CD4-positive, alpha-beta T cell (primary cell): ENCODE measurements at regions of chr13 and their contacts with region 1.

Region 1: DNA sequence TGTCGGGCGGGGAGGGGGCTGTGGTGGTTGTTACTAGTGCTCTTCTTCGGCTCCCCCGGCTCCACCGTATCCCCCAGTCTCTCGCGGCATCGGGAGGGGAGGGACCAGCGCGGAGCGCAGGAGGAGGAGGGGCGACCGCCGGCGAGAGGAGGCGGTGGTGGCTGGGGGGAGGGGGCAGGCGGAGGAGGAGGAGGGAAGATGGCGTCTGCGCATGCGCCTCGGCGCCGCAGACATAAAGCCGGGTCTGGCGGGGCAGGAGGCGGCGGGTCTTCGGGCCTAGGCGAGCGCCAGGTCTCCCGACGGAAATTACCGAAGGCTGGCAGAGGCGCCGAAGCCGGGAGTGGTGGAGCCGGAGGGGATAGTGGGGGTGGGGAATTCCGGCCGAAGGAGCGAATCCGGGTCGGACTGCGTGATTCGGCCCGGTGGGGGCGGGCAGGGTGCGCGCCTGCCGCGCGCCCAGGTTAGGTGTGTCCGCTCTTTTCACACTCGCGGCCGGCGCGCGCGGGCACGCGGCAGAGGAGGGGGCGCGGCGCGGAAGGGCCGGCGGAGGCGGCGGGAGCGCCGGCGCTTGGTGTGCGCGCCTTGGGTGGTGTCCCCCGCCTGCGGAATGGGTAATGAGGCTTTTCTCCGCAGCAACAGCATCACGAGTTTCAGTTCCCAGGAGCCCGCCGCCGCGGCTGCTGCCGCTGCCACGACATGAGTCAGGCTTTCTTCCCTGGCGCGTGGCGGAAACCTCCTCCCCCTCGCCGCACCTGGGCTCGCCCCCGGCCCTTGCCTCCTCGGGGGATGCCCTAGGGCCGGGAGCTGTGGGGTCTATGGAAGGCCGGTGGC is 1.3 kb upstream of the TSC22D1 start:
- DNase-seq: peak; percentile 93 to 98 (median 96)
- ATAC-seq: peak; percentile 73
- H3K4me3 ChIP-seq: peak overlapping the region; percentile 77
- H3K4me3 Mint-ChIP-seq: peak overlapping the region; percentile 99
- H3K27ac ChIP-seq: peak overlapping the region; percentile 86 to 89
- H3K27ac Mint-ChIP-seq: peak overlapping the region; percentile 96
- H3K4me1 ChIP-seq: peaks cover 37% of the 10 kb centered on the region
- H3K4me1 Mint-ChIP-seq: peaks cover 41% of the 10 kb centered on the region
- H3K27me3 ChIP-seq: no peaks in the 10 kb centered on the region
- H3K27me3 Mint-ChIP-seq: no peaks in the 10 kb centered on the region
- CTCF ChIP-seq: no peak

Region 2: GRCh38 chr13:44141725-44142539 is 435.5 kb before region 1 on chr13:
- CTCF ChIA-PET with region 1: no interaction called
- POLR2A ChIA-PET with region 1: interaction called, 4 read pairs
- intact Hi-C with region 1: loop called in 1 of 2 experiments (anchors 5 kb)
- DNase-seq: peak; percentile 76 to 95 (median 90)
- ATAC-seq: peak; percentile 96
- H3K4me3 ChIP-seq: peak overlapping the region; percentile 84
- H3K4me3 Mint-ChIP-seq: peak overlapping the region; percentile 93
- H3K27ac ChIP-seq: peak overlapping the region; percentile 48 to 76
- H3K27ac Mint-ChIP-seq: peak overlapping the region; percentile 77
- H3K4me1 ChIP-seq: peaks cover 15% of the 10 kb centered on the region
- H3K4me1 Mint-ChIP-seq: peaks cover 16% of the 10 kb centered on the region
- H3K27me3 ChIP-seq: no peaks in the 10 kb centered on the region
- H3K27me3 Mint-ChIP-seq: no peaks in the 10 kb centered on the region
- CTCF ChIP-seq: no peak

Region 3: DNA sequence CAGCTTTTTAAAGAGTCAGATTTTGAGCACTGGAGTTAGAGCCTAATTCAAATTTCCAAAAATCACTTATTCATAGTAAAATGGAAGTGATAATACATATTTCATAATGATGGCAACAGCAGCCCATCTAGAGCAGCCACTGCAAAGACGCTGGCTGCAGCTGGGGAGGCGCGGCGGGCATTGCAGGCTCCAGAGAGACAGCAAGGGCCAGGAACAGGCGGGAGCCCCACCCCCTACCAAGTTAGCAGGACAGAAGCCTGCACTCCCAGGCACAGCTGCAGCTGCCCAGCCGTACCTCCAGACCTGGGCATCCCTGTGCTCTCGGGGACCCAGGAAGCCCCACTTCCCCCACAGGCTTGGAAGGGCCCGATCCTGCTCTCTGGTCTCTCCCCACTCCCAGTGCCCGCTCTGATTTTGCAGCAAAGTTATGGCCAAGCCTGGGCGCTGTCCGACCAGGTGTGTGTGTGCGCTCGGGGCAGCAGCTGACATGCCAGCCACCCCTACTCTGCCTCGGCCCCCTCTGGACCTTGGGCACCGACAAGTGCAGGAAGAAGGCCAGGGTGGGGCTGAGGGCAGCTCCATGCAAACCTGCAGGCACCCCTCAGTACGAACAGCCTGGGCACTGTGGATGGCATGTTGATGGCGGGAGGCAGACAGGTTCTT is 119.0 kb before region 1 on chr13:
- CTCF ChIA-PET with region 1: no interaction called
- POLR2A ChIA-PET with region 1: no interaction called
- intact Hi-C with region 1: no loop called
- DNase-seq: no peak
- ATAC-seq: no peak
- H3K4me3 ChIP-seq: no peak overlapping the region
- H3K4me3 Mint-ChIP-seq: no peak overlapping the region
- H3K27ac ChIP-seq: no peak overlapping the region
- H3K27ac Mint-ChIP-seq: no peak overlapping the region
- H3K4me1 ChIP-seq: peaks cover 7% of the 10 kb centered on the region
- H3K4me1 Mint-ChIP-seq: peaks cover 17% of the 10 kb centered on the region
- H3K27me3 ChIP-seq: no peaks in the 10 kb centered on the region
- H3K27me3 Mint-ChIP-seq: no peaks in the 10 kb centered on the region
- CTCF ChIP-seq: no peak

Region 4: GRCh38 chr13:44484562-44485138 is 92.8 kb before region 1 on chr13:
- CTCF ChIA-PET with region 1: no interaction called
- POLR2A ChIA-PET with region 1: interaction called, 3 read pairs
- intact Hi-C with region 1: loop called in 1 of 2 experiments (anchors 2 kb)
- DNase-seq: peak in 2 of 14 experiments; percentile 6 to 29
- ATAC-seq: no peak
- H3K4me3 ChIP-seq: peak overlapping the region; percentile 1
- H3K4me3 Mint-ChIP-seq: no peak overlapping the region
- H3K27ac ChIP-seq: no peak overlapping the region
- H3K27ac Mint-ChIP-seq: no peak overlapping the region
- H3K4me1 ChIP-seq: no peaks in the 10 kb centered on the region
- H3K4me1 Mint-ChIP-seq: peaks cover 23% of the 10 kb centered on the region
- H3K27me3 ChIP-seq: no peaks in the 10 kb centered on the region
- H3K27me3 Mint-ChIP-seq: no peaks in the 10 kb centered on the region
- CTCF ChIP-seq: no peak

Region 5: GRCh38 chr13:44523146-44524015 is 54.1 kb before region 1 on chr13:
- CTCF ChIA-PET with region 1: no interaction called
- POLR2A ChIA-PET with region 1: no interaction called
- intact Hi-C with region 1: no loop called
- DNase-seq: no peak
- ATAC-seq: no peak
- H3K4me3 ChIP-seq: no peak overlapping the region
- H3K4me3 Mint-ChIP-seq: no peak overlapping the region
- H3K27ac ChIP-seq: no peak overlapping the region
- H3K27ac Mint-ChIP-seq: no peak overlapping the region
- H3K4me1 ChIP-seq: no peaks in the 10 kb centered on the region
- H3K4me1 Mint-ChIP-seq: no peaks in the 10 kb centered on the region
- H3K27me3 ChIP-seq: no peaks in the 10 kb centered on the region
- H3K27me3 Mint-ChIP-seq: no peaks in the 10 kb centered on the region
- CTCF ChIP-seq: no peak

Region 6: GRCh38 chr13:44917589-44918325 is 340.3 kb after region 1 on chr13:
- CTCF ChIA-PET with region 1: no interaction called
- POLR2A ChIA-PET with region 1: interaction called, 17 read pairs
- intact Hi-C with region 1: loop called (anchors 1 to 5 kb)
- DNase-seq: peak; percentile 95 to 99 (median 98)
- ATAC-seq: peak; percentile 77
- H3K4me3 ChIP-seq: peak overlapping the region; percentile 62
- H3K4me3 Mint-ChIP-seq: no peak overlapping the region
- H3K27ac ChIP-seq: peak overlapping the region; percentile 84 to 91
- H3K27ac Mint-ChIP-seq: no peak overlapping the region
- H3K4me1 ChIP-seq: peaks cover 19% of the 10 kb centered on the region
- H3K4me1 Mint-ChIP-seq: peaks cover 5% of the 10 kb centered on the region
- H3K27me3 ChIP-seq: no peaks in the 10 kb centered on the region
- H3K27me3 Mint-ChIP-seq: no peaks in the 10 kb centered on the region
- CTCF ChIP-seq: no peak

Region 7: GRCh38 chr13:45340926-45341750 is 763.7 kb after region 1 on chr13 and contains the start of gene TPT1:
- CTCF ChIA-PET with region 1: no interaction called
- POLR2A ChIA-PET with region 1: no interaction called
- intact Hi-C with region 1: loop called in 1 of 2 experiments (anchors 5 kb)
- DNase-seq: peak; percentile 99 to 100 (median 100)
- ATAC-seq: peak; percentile 84
- H3K4me3 ChIP-seq: peak within 1 kb of the TSS; percentile 98
- H3K4me3 Mint-ChIP-seq: peak within 1 kb of the TSS; percentile 99
- H3K27ac ChIP-seq: peak within 1 kb of the TSS; percentile 98 to 100
- H3K27ac Mint-ChIP-seq: peak within 1 kb of the TSS; percentile 84
- H3K4me1 ChIP-seq: peaks cover 40% of the 10 kb centered on the region
- H3K4me1 Mint-ChIP-seq: peaks cover 66% of the 10 kb centered on the region
- H3K27me3 ChIP-seq: no peaks in the 10 kb centered on the region
- H3K27me3 Mint-ChIP-seq: no peaks in the 10 kb centered on the region
- CTCF ChIP-seq: no peak
- total RNA-seq, gene TPT1: 8,742 to 8,834 TPM

Region 8: GRCh38 chr13:46052319-46053161 is 1475.1 kb after region 1 on chr13 and contains the start of gene ZC3H13:
- CTCF ChIA-PET with region 1: no interaction called
- POLR2A ChIA-PET with region 1: no interaction called
- intact Hi-C with region 1: loop called in 1 of 2 experiments (anchors 5 kb)
- DNase-seq: peak; percentile 87 to 98 (median 89)
- ATAC-seq: peak; percentile 96
- H3K4me3 ChIP-seq: peak within 1 kb of the TSS; percentile 84
- H3K4me3 Mint-ChIP-seq: peak within 1 kb of the TSS; percentile 91
- H3K27ac ChIP-seq: peak within 1 kb of the TSS; percentile 97
- H3K27ac Mint-ChIP-seq: peak within 1 kb of the TSS; percentile 86
- H3K4me1 ChIP-seq: peaks cover 2% of the 10 kb centered on the region
- H3K4me1 Mint-ChIP-seq: peaks cover 53% of the 10 kb centered on the region
- H3K27me3 ChIP-seq: peaks cover 0 to 10% of the 10 kb centered on the region in 2 experiments
- H3K27me3 Mint-ChIP-seq: peaks cover 22% of the 10 kb centered on the region
- CTCF ChIP-seq: peak; percentile 48
- total RNA-seq, gene ZC3H13: 36.5 to 43.8 TPM